AG04450 (cell line): ENCODE measurements at regions of chr17 and their contacts with region 1.

Region 1: DNA sequence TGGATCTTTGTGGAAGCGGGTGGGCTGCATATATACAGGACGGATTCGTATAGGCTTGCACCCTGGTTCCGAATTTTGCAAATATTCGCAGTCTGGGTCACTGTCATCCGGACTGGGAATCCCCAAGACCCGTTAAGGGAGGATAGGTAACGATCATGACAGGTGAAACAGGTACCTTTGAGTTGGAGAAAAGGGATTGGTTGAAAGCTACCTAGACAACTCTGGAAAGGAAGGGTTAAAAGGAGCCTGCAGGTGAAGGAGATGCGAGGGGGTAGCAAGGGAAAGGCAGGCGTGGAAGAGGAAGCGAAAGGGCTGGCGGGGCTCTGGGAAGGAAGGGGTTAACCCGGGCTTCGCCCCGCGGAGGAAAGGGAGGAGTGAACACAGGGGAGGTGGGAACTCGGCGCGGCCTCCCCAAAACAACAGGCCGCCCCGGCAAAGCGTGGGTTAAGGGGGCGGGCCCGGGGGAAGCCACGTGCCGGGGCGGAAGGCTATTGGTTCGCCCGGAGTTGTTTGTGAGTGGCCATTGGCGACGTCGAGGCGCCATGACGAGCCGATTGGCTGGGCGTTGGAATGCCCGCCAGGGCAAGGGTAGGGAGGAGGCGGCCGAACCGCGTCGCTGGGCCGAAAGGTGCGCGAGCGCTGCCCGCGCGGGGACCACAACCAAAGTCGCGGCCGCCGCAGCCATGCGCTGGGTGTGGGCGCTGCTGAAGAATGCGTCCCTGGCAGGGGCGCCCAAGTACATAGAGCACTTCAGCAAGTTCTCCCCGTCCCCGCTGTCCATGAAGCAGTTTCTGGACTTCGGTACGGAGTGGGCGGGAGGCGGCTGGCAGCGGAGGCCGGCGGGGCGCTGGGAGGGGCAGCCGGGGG is at the start of gene PDK2:
- DNase-seq: peak; percentile 87
- H3K4me3 ChIP-seq: peak within 1 kb of the TSS; percentile 83
- H3K27ac ChIP-seq: peak within 1 kb of the TSS; percentile 70
- H3K27me3 ChIP-seq: no peaks in the 10 kb centered on the region
- CTCF ChIP-seq: no peak
- polyA plus RNA-seq, gene PDK2: 62.4 and 81.7 TPM in 2 replicates

Region 2: DNA sequence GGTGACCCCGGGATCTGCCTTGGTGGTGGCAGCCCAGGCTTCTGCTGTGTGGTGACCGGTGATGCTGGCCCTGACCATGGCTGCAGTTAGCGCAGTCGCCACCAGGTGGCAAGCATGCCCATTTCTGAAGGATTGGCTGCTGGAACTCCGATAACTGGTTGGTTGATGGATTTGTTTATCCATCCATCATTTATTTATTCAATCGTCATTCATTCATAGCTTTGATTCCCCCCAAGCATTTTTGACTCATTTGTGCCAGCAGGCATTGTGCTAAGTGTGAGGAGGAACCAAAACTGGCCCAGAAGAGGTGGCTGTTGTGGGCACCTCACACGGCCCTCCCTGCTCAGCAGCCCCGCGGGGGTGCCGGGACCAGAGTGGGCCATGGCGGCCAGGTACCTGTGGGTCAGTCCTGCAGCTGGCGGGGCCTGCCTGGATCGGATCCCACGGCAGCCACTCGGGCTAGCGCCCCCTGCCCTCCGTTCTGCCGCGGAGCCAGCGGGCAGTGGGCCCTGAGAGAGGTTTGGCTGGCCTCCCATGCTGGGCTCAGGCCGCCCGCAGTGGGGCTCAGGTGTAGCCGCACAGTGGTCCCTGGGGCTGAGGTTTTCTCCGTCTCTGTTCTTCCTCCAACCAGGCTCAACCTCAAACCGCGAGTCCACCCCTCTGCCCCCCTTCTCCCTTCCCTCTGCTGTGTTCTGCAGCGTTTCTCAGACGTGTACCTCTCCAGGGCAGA is 67.9 kb before region 1 on chr17:
- CTCF ChIA-PET with region 1: interaction called, 32 read pairs
- POLR2A ChIA-PET with region 1: no interaction called
- DNase-seq: no peak
- H3K4me3 ChIP-seq: peak overlapping the region; percentile 51
- H3K27ac ChIP-seq: peak overlapping the region; percentile 91
- H3K27me3 ChIP-seq: no peaks in the 10 kb centered on the region
- CTCF ChIP-seq: peak; percentile 90

Region 3: GRCh38 chr17:50064258-50065001 is 30.6 kb before region 1 on chr17:
- CTCF ChIA-PET with region 1: interaction called, 40 read pairs
- POLR2A ChIA-PET with region 1: no interaction called
- DNase-seq: peak; percentile 85
- H3K4me3 ChIP-seq: no peak overlapping the region
- H3K27ac ChIP-seq: peak overlapping the region; percentile 98
- H3K27me3 ChIP-seq: no peaks in the 10 kb centered on the region
- CTCF ChIP-seq: no peak

Region 4: DNA sequence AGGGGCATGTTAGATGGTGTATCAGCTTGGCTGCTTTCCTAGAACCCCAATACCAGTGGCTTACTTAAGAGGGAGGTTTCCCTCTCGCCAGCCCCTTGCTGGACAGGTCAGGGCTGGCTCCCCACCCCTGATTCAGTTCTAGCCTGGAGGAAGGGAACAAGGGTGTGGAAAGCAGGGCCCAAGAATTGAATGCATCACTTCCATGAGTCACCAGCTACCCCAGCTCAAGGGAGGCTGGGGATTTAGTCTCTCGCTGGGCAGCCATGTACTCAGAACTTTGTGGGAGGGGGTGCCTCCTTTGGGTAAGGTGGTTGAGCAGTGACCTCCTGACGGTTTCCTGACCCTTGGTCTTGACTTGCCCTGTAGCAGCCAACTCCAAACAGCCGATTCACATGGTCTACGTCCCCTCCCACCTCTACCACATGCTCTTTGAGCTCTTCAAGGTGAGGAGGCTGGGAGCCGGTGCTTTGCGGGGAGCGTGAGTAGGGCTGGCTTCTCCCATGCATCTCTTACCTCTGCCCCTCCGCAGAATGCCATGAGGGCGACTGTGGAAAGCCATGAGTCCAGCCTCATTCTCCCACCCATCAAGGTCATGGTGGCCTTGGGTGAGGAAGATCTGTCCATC is 12.9 kb after region 1 on chr17:
- CTCF ChIA-PET with region 1: interaction called, 18 read pairs
- POLR2A ChIA-PET with region 1: interaction called, 5 read pairs
- DNase-seq: no peak
- H3K4me3 ChIP-seq: no peak overlapping the region
- H3K27ac ChIP-seq: peak overlapping the region; percentile 21
- H3K27me3 ChIP-seq: no peaks in the 10 kb centered on the region
- CTCF ChIP-seq: no peak

Region 5: GRCh38 chr17:50151041-50151936 is 56.3 kb after region 1 on chr17:
- CTCF ChIA-PET with region 1: interaction called, 14 read pairs
- POLR2A ChIA-PET with region 1: no interaction called
- DNase-seq: peak; percentile 69
- H3K4me3 ChIP-seq: peak overlapping the region; percentile 79
- H3K27ac ChIP-seq: peak overlapping the region; percentile 67
- H3K27me3 ChIP-seq: no peaks in the 10 kb centered on the region
- CTCF ChIP-seq: peak; percentile 69

Region 6: GRCh38 chr17:50355506-50356341 is 260.7 kb after region 1 on chr17:
- CTCF ChIA-PET with region 1: no interaction called
- POLR2A ChIA-PET with region 1: no interaction called
- DNase-seq: no peak
- H3K4me3 ChIP-seq: no peak overlapping the region
- H3K27ac ChIP-seq: no peak overlapping the region
- H3K27me3 ChIP-seq: no peaks in the 10 kb centered on the region
- CTCF ChIP-seq: no peak